ENCODE measurements at regions of chr12 and their contacts with region 1.

Region 1: GRCh38 chr12:26126340-26127284 is 1.8 kb upstream of the BHLHE41 start:
- DNase-seq: peak; percentile 80
- ATAC-seq: peak; percentile 70
- H3K4me3 ChIP-seq: peak overlapping the region; percentile 69
- H3K27ac ChIP-seq: no peak overlapping the region; the same call in 1 of the 2 replicates
- H3K4me1 ChIP-seq: no peaks in the 10 kb centered on the region
- H3K27me3 ChIP-seq: peaks cover 29% of the 10 kb centered on the region
- CTCF ChIP-seq: no peak
- POLR2A ChIP-seq: no peak
- RAD21 ChIP-seq: peak; percentile 37

Region 2: GRCh38 chr12:26153421-26154154 is 27.0 kb after region 1 on chr12:
- CTCF ChIA-PET with region 1: no interaction called
- POLR2A ChIA-PET with region 1: no interaction called
- dilution Hi-C with region 1: no loop called
- in situ Hi-C with region 1: no loop called
- intact Hi-C with region 1: loop called (anchors 2 kb)
- DNase-seq: peak; percentile 97
- ATAC-seq: peak; percentile 92
- H3K4me3 ChIP-seq: no peak overlapping the region
- H3K27ac ChIP-seq: no peak overlapping the region; the same call in 1 of the 2 replicates
- H3K4me1 ChIP-seq: peaks cover 19% of the 10 kb centered on the region
- H3K27me3 ChIP-seq: no peaks in the 10 kb centered on the region; the same call in 1 of the 2 replicates
- CTCF ChIP-seq: peak; percentile 20; the same call in 1 of the 2 replicates
- POLR2A ChIP-seq: no peak; the same call in 1 of the 2 replicates
- RAD21 ChIP-seq: peak; percentile 36

Region 3: DNA sequence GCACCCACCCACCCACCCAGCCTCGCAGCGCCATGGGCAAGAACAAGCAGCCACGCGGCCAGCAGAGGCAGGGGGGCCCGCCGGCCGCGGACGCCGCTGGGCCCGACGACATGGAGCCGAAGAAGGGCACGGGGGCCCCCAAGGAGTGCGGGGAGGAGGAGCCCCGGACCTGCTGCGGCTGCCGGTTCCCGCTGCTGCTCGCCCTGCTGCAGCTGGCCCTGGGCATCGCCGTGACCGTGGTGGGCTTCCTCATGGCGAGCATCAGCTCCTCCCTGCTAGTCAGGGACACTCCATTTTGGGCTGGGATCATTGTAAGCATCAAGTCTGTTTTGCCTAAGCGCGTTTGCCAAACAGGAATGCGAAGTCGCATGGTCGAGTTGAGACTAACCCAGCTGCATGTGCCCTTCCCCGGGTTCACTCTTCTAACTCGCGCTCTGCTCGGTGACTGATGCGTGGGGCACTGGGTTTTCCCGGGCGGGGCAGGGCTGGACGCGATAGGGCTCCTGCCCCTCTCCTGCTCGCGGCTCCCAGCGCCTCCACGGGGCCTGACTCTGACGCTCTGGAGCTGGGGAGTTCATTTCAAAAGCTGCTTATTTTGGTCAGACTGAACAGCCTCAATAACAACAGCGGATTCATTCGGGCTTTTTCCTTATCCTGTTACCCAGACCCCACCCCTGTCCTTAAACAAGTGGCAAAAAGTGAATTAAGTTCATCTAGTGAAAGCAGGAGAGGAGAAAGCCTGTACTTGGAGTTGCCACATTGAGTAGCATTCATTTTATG is 69.2 kb after region 1 on chr12:
- CTCF ChIA-PET with region 1: no interaction called
- POLR2A ChIA-PET with region 1: no interaction called
- dilution Hi-C with region 1: no loop called
- in situ Hi-C with region 1: no loop called
- intact Hi-C with region 1: loop called (anchors 5 kb)
- DNase-seq: peak; percentile 31
- ATAC-seq: peak; percentile 81
- H3K4me3 ChIP-seq: peak overlapping the region; percentile 51
- H3K27ac ChIP-seq: peak overlapping the region; percentile 72
- H3K4me1 ChIP-seq: peaks cover 2% of the 10 kb centered on the region
- H3K27me3 ChIP-seq: no peaks in the 10 kb centered on the region
- CTCF ChIP-seq: no peak
- POLR2A ChIP-seq: no peak
- RAD21 ChIP-seq: no peak

Region 4: GRCh38 chr12:26226629-26227360 is 100.2 kb after region 1 on chr12:
- CTCF ChIA-PET with region 1: no interaction called
- POLR2A ChIA-PET with region 1: no interaction called
- dilution Hi-C with region 1: no loop called
- in situ Hi-C with region 1: no loop called
- intact Hi-C with region 1: loop called (anchors 5 kb)
- DNase-seq: no peak
- ATAC-seq: peak; percentile 77
- H3K4me3 ChIP-seq: peak overlapping the region; percentile 41
- H3K27ac ChIP-seq: no peak overlapping the region
- H3K4me1 ChIP-seq: peaks cover 2% of the 10 kb centered on the region; the same call in 1 of the 2 replicates
- H3K27me3 ChIP-seq: peaks cover 6% of the 10 kb centered on the region; the same call in 1 of the 2 replicates
- CTCF ChIP-seq: no peak
- POLR2A ChIP-seq: no peak
- RAD21 ChIP-seq: no peak

Region 5: GRCh38 chr12:26274441-26275312 is 148.1 kb after region 1 on chr12:
- CTCF ChIA-PET with region 1: no interaction called
- POLR2A ChIA-PET with region 1: no interaction called
- dilution Hi-C with region 1: no loop called
- in situ Hi-C with region 1: no loop called
- intact Hi-C with region 1: loop called (anchors 1 kb)
- DNase-seq: peak; percentile 100
- ATAC-seq: peak; percentile 96
- H3K4me3 ChIP-seq: no peak overlapping the region
- H3K27ac ChIP-seq: peak overlapping the region; percentile 80
- H3K4me1 ChIP-seq: peaks cover 18% of the 10 kb centered on the region
- H3K27me3 ChIP-seq: no peaks in the 10 kb centered on the region
- CTCF ChIP-seq: 0 out of 2 replicates have a peak, but pooled peaks have one; percentile 16
- POLR2A ChIP-seq: no peak; the same call in 1 of the 2 replicates
- RAD21 ChIP-seq: peak; percentile 31; the same call in 1 of the 2 replicates

Region 6: DNA sequence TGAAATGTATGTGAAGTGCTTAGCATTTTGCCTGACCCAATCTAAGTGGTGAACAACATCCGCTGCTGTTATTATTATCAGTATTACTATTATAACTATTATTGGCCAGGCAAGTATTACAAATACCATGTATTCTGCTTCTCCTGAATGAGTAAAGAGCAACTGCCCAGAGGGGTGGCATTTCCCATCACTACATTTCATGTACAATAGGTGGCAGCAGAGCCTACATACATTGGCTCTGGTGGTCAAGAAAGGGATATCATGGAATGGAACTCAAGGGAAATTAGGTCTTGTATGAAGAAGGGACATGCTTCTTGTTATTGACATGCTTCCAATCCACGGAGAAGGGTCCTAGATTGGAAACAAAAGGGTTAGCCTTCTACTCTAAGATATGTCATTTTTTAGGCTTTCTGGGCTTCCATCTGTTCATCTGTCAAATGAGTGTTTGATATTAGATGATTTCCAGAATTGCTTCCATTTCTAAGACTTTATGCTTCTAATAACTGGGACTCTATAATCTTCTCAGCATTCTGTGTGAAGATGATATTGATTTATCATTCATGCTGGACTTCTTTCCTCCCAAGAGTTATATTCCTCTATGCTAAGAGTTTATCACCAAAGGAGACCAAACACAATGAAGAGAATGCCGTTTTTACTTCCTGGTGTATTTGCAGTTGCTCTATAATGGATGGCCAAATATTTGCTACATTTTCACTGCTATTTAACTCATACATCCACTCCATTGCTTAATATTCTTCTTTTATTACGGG is 307.9 kb after region 1 on chr12:
- CTCF ChIA-PET with region 1: interaction called, 4 read pairs
- POLR2A ChIA-PET with region 1: no interaction called
- dilution Hi-C with region 1: no loop called
- in situ Hi-C with region 1: no loop called
- intact Hi-C with region 1: loop called (anchors 2 kb)
- DNase-seq: peak; percentile 68
- ATAC-seq: peak; percentile 84; the same call in 1 of the 2 replicates
- H3K4me3 ChIP-seq: no peak overlapping the region
- H3K27ac ChIP-seq: no peak overlapping the region
- H3K4me1 ChIP-seq: no peaks in the 10 kb centered on the region
- H3K27me3 ChIP-seq: no peaks in the 10 kb centered on the region
- CTCF ChIP-seq: peak; percentile 81
- POLR2A ChIP-seq: no peak
- RAD21 ChIP-seq: peak; percentile 79

Region 7: DNA sequence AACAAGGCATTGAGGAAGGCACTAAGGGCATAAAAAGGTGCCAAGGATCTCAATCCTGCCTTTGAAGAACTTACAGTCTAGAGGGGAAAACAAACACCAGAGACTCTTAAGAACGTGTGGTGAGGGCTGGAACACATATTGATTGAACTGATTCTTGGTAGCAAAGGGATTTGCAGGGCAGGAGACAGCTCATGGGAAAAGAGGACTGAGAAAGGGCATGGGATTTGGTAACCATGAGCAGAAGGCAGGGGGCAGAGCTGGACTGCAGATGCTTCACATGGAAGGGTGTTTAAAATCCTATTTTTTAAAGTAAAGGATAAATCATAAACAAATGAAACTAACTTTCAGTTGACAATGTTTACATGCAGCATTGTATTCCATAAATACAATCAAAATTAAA is 503.3 kb after region 1 on chr12:
- CTCF ChIA-PET with region 1: interaction called, 3 read pairs
- POLR2A ChIA-PET with region 1: no interaction called
- dilution Hi-C with region 1: no loop called
- in situ Hi-C with region 1: no loop called
- intact Hi-C with region 1: loop called (anchors 1 kb)
- DNase-seq: peak; percentile 70
- ATAC-seq: peak; percentile 71
- H3K4me3 ChIP-seq: no peak overlapping the region
- H3K27ac ChIP-seq: no peak overlapping the region; the same call in 1 of the 2 replicates
- H3K4me1 ChIP-seq: peaks cover 11% of the 10 kb centered on the region
- H3K27me3 ChIP-seq: no peaks in the 10 kb centered on the region
- CTCF ChIP-seq: peak; percentile 75
- POLR2A ChIP-seq: no peak
- RAD21 ChIP-seq: peak; percentile 77